Naive thymus-derived CD4-positive, alpha-beta T cell (primary cell): ENCODE measurements at regions of chr14 and their contacts with region 1.

Region 1: GRCh38 chr14:50116181-50116956 is at the start of gene VCPKMT:
- DNase-seq: peak; percentile 93 to 97 (median 97)
- ATAC-seq: peak; percentile 99
- H3K4me3 ChIP-seq: peak within 1 kb of the TSS; percentile 74
- H3K4me3 Mint-ChIP-seq: peak within 1 kb of the TSS; percentile 92 to 98 (median 96)
- H3K27ac ChIP-seq: peak within 1 kb of the TSS; percentile 94
- H3K27ac Mint-ChIP-seq: peak within 1 kb of the TSS; percentile 97 to 99 (median 98)
- H3K4me1 ChIP-seq: peaks cover 18 to 20% of the 10 kb centered on the region in 2 donors
- H3K4me1 Mint-ChIP-seq: peaks cover 11 to 37% (median 23%) of the 10 kb centered on the region in 7 donors
- H3K27me3 ChIP-seq: no peaks in the 10 kb centered on the region
- H3K27me3 Mint-ChIP-seq: no peaks in the 10 kb centered on the region
- total RNA-seq, gene VCPKMT: 10.3 to 25.9 (median 17.4) TPM

Region 2: DNA sequence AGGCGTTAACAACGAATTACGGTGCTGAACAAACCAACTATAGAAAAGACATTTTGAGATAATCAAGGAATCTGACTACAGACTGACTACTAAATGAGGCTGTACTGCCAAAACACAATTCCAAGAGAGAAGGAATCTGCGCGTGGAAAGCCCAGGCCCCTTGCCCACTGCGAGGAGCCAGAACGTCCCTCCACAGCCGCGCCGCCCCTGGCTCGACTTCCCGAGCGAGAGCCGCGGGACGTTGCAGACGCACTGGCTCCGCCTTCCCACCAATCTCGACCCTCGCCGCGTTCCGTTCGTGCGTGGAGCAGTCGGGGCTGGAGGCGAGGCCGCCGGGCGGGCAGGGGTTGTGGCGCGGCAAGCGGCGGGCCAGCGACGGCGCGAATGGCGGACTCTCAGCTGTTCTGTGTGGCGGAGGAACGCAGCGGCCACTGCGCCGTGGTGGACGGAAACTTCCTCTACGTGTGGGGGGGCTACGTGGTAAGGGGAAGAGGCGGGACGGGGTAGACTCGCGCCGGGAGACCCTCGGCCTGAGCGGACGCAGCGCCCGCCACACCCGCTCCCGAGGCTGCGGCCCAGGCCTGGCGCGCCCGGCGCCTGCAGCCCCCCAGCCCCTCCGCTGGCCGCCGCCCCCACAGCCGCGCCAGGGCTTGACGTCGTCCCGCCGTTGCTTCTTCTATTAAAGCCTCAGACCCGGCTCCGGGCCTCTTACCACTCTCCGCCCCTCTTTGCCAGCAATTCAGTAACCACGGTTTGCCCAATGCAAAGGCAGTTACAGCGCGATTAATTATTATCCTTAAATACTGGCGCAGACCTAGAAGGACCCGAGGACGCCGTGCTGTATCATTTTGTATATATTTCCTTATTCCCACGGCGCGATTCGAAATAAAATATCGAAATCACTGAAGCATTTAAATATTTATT is 423.3 kb before region 1 on chr14 and contains the start of gene KLHDC1:
- CTCF ChIA-PET with region 1: no interaction called
- POLR2A ChIA-PET with region 1: interaction called, 4 read pairs
- intact Hi-C with region 1: loop called (anchors 2 kb)
- DNase-seq: peak; percentile 70 to 84 (median 80)
- ATAC-seq: peak; percentile 89
- H3K4me3 ChIP-seq: peak within 1 kb of the TSS; percentile 67
- H3K4me3 Mint-ChIP-seq: peak within 1 kb of the TSS; percentile 81 to 100 (median 89)
- H3K27ac ChIP-seq: peak within 1 kb of the TSS; percentile 80
- H3K27ac Mint-ChIP-seq: peak within 1 kb of the TSS; percentile 79 to 99 (median 94)
- H3K4me1 ChIP-seq: peaks cover 8 to 19% of the 10 kb centered on the region in 2 donors
- H3K4me1 Mint-ChIP-seq: peaks cover 20 to 52% (median 43%) of the 10 kb centered on the region in 7 donors
- H3K27me3 ChIP-seq: no peaks in the 10 kb centered on the region
- H3K27me3 Mint-ChIP-seq: no peaks in the 10 kb centered on the region
- total RNA-seq, gene KLHDC1: 2.6 to 18.0 (median 12.2) TPM

Region 3: GRCh38 chr14:49867831-49868723 is 248.3 kb before region 1 on chr14:
- CTCF ChIA-PET with region 1: interaction called, 11 read pairs
- POLR2A ChIA-PET with region 1: interaction called, 40 read pairs
- intact Hi-C with region 1: loop called (anchors 1 kb)
- DNase-seq: peak; percentile 87 to 97 (median 93)
- ATAC-seq: peak; percentile 96
- H3K4me3 ChIP-seq: peak overlapping the region; percentile 75
- H3K4me3 Mint-ChIP-seq: peak overlapping the region; percentile 79 to 95 (median 90)
- H3K27ac ChIP-seq: peak overlapping the region; percentile 91
- H3K27ac Mint-ChIP-seq: peak overlapping the region; percentile 93 to 99 (median 97)
- H3K4me1 ChIP-seq: peaks cover 31 to 35% of the 10 kb centered on the region in 2 donors
- H3K4me1 Mint-ChIP-seq: peaks cover 9 to 31% (median 17%) of the 10 kb centered on the region in 7 donors
- H3K27me3 ChIP-seq: no peaks in the 10 kb centered on the region
- H3K27me3 Mint-ChIP-seq: no peaks in the 10 kb centered on the region

Region 4: GRCh38 chr14:50128225-50128624 is 11.9 kb after region 1 on chr14:
- CTCF ChIA-PET with region 1: no interaction called
- POLR2A ChIA-PET with region 1: interaction called, 16 read pairs
- intact Hi-C with region 1: no loop called
- DNase-seq: no peak
- ATAC-seq: no peak
- H3K4me3 ChIP-seq: no peak overlapping the region
- H3K4me3 Mint-ChIP-seq: no peak overlapping the region
- H3K27ac ChIP-seq: no peak overlapping the region
- H3K27ac Mint-ChIP-seq: peak overlapping the region in 3 of 9 donors; percentile 25 to 71 (median 68)
- H3K4me1 ChIP-seq: no peaks in the 10 kb centered on the region
- H3K4me1 Mint-ChIP-seq: peaks cover 0 to 13% (median 0%) of the 10 kb centered on the region in 7 donors
- H3K27me3 ChIP-seq: no peaks in the 10 kb centered on the region
- H3K27me3 Mint-ChIP-seq: no peaks in the 10 kb centered on the region

Region 5: GRCh38 chr14:50210074-50210473 is 93.7 kb after region 1 on chr14:
- CTCF ChIA-PET with region 1: no interaction called
- POLR2A ChIA-PET with region 1: no interaction called
- intact Hi-C with region 1: no loop called
- DNase-seq: no peak
- ATAC-seq: no peak
- H3K4me3 ChIP-seq: no peak overlapping the region
- H3K4me3 Mint-ChIP-seq: no peak overlapping the region
- H3K27ac ChIP-seq: no peak overlapping the region
- H3K27ac Mint-ChIP-seq: no peak overlapping the region
- H3K4me1 ChIP-seq: no peaks in the 10 kb centered on the region
- H3K4me1 Mint-ChIP-seq: peaks cover 4 to 51% (median 37%) of the 10 kb centered on the region in 7 donors
- H3K27me3 ChIP-seq: no peaks in the 10 kb centered on the region
- H3K27me3 Mint-ChIP-seq: no peaks in the 10 kb centered on the region

Region 6: GRCh38 chr14:50260511-50260910 is 144.1 kb after region 1 on chr14:
- CTCF ChIA-PET with region 1: no interaction called
- POLR2A ChIA-PET with region 1: no interaction called
- intact Hi-C with region 1: loop called (anchors 2 to 5 kb)
- DNase-seq: peak in 7 of 9 donors; percentile 10 to 46 (median 26)
- ATAC-seq: peak; percentile 67
- H3K4me3 ChIP-seq: no peak overlapping the region
- H3K4me3 Mint-ChIP-seq: no peak overlapping the region
- H3K27ac ChIP-seq: no peak overlapping the region
- H3K27ac Mint-ChIP-seq: peak overlapping the region in 3 of 9 donors; percentile 4 to 16 (median 8)
- H3K4me1 ChIP-seq: no peaks in the 10 kb centered on the region
- H3K4me1 Mint-ChIP-seq: peaks cover 0 to 8% (median 0%) of the 10 kb centered on the region in 7 donors
- H3K27me3 ChIP-seq: no peaks in the 10 kb centered on the region
- H3K27me3 Mint-ChIP-seq: no peaks in the 10 kb centered on the region